ENCODE measurements at regions of chr3 and their contacts with region 1.

Region 1: GRCh38 chr3:172039436-172040077 is at the start of gene FNDC3B:
- DNase-seq: peak; percentile 76 to 92 (median 89)
- ATAC-seq: peak; percentile 96
- H3K4me3 ChIP-seq: peak within 1 kb of the TSS; percentile 64
- H3K4me3 Mint-ChIP-seq: peak within 1 kb of the TSS; percentile 96 to 100 (median 98)
- H3K27ac ChIP-seq: peak within 1 kb of the TSS; percentile 97
- H3K27ac Mint-ChIP-seq: peak within 1 kb of the TSS; percentile 94 to 99 (median 97)
- H3K4me1 ChIP-seq: peaks cover 11 to 15% of the 10 kb centered on the region in 2 donors
- H3K4me1 Mint-ChIP-seq: peaks cover 27 to 73% (median 55%) of the 10 kb centered on the region in 7 donors
- H3K27me3 ChIP-seq: no peaks in the 10 kb centered on the region
- H3K27me3 Mint-ChIP-seq: peaks cover 0 to 19% (median 0%) of the 10 kb centered on the region in 5 donors
- total RNA-seq, gene FNDC3B: 21.1 to 78.6 (median 29.4) TPM

Region 2: GRCh38 chr3:170908235-170909116 is 1131.1 kb before region 1 on chr3 and contains the start of gene EIF5A2:
- CTCF ChIA-PET with region 1: no interaction called
- POLR2A ChIA-PET with region 1: no interaction called
- intact Hi-C with region 1: loop called in 1 of 2 experiments (anchors 5 kb)
- DNase-seq: peak; percentile 87 to 97 (median 94)
- ATAC-seq: peak; percentile 98
- H3K4me3 ChIP-seq: peak within 1 kb of the TSS; percentile 50
- H3K4me3 Mint-ChIP-seq: peak within 1 kb of the TSS; percentile 90 to 98 (median 96)
- H3K27ac ChIP-seq: peak within 1 kb of the TSS; percentile 68
- H3K27ac Mint-ChIP-seq: peak within 1 kb of the TSS; percentile 89 to 96 (median 94)
- H3K4me1 ChIP-seq: peaks cover 15 to 16% of the 10 kb centered on the region in 2 donors
- H3K4me1 Mint-ChIP-seq: peaks cover 0 to 31% (median 22%) of the 10 kb centered on the region in 7 donors
- H3K27me3 ChIP-seq: no peaks in the 10 kb centered on the region
- H3K27me3 Mint-ChIP-seq: peaks cover 0 to 19% (median 0%) of the 10 kb centered on the region in 5 donors
- total RNA-seq, gene EIF5A2: 5.5 to 9.8 (median 7.4) TPM

Region 3: DNA sequence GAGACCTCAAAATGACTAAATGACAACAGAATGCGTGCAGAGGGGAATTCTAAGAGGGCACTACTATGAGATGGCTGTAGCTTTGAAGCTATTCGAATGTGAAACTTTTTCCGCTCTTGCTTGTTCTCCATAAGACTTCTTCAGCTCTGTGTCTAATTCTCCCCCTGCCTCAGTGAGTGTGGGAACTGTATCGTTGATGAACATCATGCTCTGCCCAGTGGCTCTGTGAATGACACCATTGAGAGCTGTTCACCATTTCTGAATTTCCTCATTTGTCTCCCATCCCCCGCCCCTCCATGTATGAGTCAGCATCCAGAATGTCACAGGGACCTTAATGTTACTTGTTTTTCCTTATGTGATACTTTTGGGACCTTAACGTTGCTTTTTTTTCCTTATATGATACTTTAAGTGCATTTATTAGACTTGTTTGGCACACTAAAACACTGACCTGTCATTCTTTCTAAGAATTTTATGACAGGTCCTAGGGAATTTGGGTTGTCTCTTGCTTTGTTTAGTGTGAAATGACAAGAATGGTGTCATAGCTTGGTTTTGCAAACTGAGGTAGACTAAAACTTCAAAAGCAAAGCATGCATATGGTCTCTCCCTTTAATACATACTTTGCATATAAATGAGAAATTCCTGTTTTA is 99.4 kb after region 1 on chr3:
- CTCF ChIA-PET with region 1: interaction called, 4 read pairs
- POLR2A ChIA-PET with region 1: no interaction called
- intact Hi-C with region 1: loop called in 1 of 2 experiments (anchors 2 kb)
- DNase-seq: no peak
- ATAC-seq: peak; percentile 64
- H3K4me3 ChIP-seq: no peak overlapping the region
- H3K4me3 Mint-ChIP-seq: peak overlapping the region in 3 of 10 donors; percentile 2 to 66 (median 3)
- H3K27ac ChIP-seq: no peak overlapping the region
- H3K27ac Mint-ChIP-seq: peak overlapping the region in 2 of 9 donors; percentile 7 to 92
- H3K4me1 ChIP-seq: peaks cover 8 to 24% of the 10 kb centered on the region in 2 donors
- H3K4me1 Mint-ChIP-seq: peaks cover 9 to 70% (median 58%) of the 10 kb centered on the region in 7 donors
- H3K27me3 ChIP-seq: no peaks in the 10 kb centered on the region
- H3K27me3 Mint-ChIP-seq: no peaks in the 10 kb centered on the region

Region 4: GRCh38 chr3:172289582-172289981 is 250.0 kb after region 1 on chr3:
- CTCF ChIA-PET with region 1: interaction called, 4 read pairs
- POLR2A ChIA-PET with region 1: no interaction called
- intact Hi-C with region 1: loop called in 1 of 2 experiments (anchors 1 kb)
- DNase-seq: no peak
- ATAC-seq: peak; percentile 40
- H3K4me3 ChIP-seq: no peak overlapping the region
- H3K4me3 Mint-ChIP-seq: peak overlapping the region in 1 of 10 donors; percentile 43
- H3K27ac ChIP-seq: no peak overlapping the region
- H3K27ac Mint-ChIP-seq: peak overlapping the region in 2 of 9 donors; percentile 39 to 51
- H3K4me1 ChIP-seq: no peaks in the 10 kb centered on the region
- H3K4me1 Mint-ChIP-seq: peaks cover 6 to 36% (median 17%) of the 10 kb centered on the region in 7 donors
- H3K27me3 ChIP-seq: no peaks in the 10 kb centered on the region
- H3K27me3 Mint-ChIP-seq: no peaks in the 10 kb centered on the region

Region 5: GRCh38 chr3:172522871-172523818 is 483.6 kb after region 1 on chr3 and contains the start of gene TNFSF10:
- CTCF ChIA-PET with region 1: no interaction called
- POLR2A ChIA-PET with region 1: no interaction called
- intact Hi-C with region 1: loop called in 1 of 2 experiments (anchors 5 kb)
- DNase-seq: peak; percentile 19 to 71 (median 60)
- ATAC-seq: peak; percentile 87
- H3K4me3 ChIP-seq: peak within 1 kb of the TSS; percentile 86
- H3K4me3 Mint-ChIP-seq: peak within 1 kb of the TSS; percentile 89 to 100 (median 96)
- H3K27ac ChIP-seq: peak within 1 kb of the TSS; percentile 85
- H3K27ac Mint-ChIP-seq: peak within 1 kb of the TSS; percentile 88 to 100 (median 99)
- H3K4me1 ChIP-seq: peaks cover 26 to 34% of the 10 kb centered on the region in 2 donors
- H3K4me1 Mint-ChIP-seq: peaks cover 36 to 63% (median 53%) of the 10 kb centered on the region in 7 donors
- H3K27me3 ChIP-seq: no peaks in the 10 kb centered on the region
- H3K27me3 Mint-ChIP-seq: no peaks in the 10 kb centered on the region
- total RNA-seq, gene TNFSF10: 10.8 to 234 (median 45.0) TPM

Measured in naive thymus-derived CD4-positive, alpha-beta T cell (primary cell).